ENCODE measurements at regions of chr1 and their contacts with region 1.

Region 1: DNA sequence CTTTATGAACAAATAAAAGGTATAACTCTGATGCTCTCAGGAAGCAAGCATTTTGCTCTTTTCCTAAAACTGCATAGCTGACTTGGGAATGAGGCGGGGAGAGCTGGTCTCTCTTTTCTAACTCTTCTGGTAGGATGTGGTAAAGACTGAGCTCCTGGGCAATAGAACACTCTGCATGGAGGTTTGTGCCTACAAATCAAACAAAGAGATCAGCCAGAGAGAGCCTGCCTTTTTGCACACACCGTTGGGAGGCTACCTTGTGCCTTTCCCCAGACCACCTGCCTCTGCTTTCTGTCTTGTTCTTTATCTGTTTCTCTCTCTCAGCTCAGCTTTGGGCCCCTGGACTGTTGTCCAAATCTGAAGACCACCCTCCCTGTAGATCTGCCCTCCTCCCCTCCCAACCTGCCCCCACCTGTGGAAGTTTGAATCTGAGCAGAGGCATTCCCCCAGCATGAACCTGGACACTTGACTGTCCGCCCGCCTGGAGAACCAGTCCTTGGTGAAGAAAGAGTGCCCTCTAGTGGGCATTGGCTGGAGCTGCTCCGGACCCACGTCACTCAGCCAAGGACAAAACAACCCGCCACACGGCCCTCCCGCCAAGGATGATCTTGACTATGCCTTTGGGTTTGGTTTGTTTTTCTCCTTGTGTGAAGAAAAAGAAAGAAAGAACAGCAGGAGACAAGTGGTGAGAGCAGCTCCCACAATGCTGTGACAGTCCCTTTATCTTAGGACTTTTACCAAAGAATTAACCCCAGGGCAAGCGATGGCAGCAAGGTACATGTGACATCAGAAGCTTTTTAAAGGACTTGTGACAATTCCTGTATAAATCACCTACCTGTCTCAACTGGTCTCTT is 228.2 kb downstream of the PBX1 start:
- DNase-seq: peak; percentile 83
- CTCF ChIP-seq: peak; percentile 95

Region 2: GRCh38 chr1:163361123-163361934 is 1425.9 kb before region 1 on chr1:
- CTCF ChIA-PET with region 1: interaction called, 11 read pairs
- POLR2A ChIA-PET with region 1: no interaction called
- DNase-seq: peak; percentile 4
- CTCF ChIP-seq: peak; percentile 60

Region 3: GRCh38 chr1:163410073-163410999 is 1376.9 kb before region 1 on chr1:
- CTCF ChIA-PET with region 1: interaction called, 10 read pairs
- POLR2A ChIA-PET with region 1: no interaction called
- DNase-seq: peak; percentile 35
- CTCF ChIP-seq: peak; percentile 83

Region 4: GRCh38 chr1:163528710-163529348 is 1258.4 kb before region 1 on chr1:
- CTCF ChIA-PET with region 1: interaction called, 15 read pairs
- POLR2A ChIA-PET with region 1: no interaction called
- DNase-seq: peak; percentile 10
- CTCF ChIP-seq: peak; percentile 49

Region 5: DNA sequence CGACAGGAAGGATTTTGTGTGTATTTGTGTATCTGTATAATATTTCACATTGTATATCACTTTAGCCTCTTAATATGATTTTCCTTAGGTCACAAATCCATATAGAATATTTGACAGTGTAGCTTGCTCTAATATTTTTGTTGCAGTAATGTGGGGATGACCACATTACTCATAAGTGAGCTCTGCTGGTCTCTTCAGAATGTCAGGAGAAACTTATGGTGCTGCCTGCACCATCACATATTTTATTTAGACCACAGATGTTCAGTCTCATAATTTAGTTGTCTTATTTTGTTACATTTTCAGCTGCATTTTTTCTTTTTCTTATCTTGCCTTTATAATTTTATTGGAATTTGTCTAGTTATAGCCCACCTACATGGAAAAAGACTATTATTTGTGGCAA is 22.9 kb before region 1 on chr1:
- CTCF ChIA-PET with region 1: interaction called, 15 read pairs
- POLR2A ChIA-PET with region 1: no interaction called
- DNase-seq: no peak
- CTCF ChIP-seq: no peak

Region 6: DNA sequence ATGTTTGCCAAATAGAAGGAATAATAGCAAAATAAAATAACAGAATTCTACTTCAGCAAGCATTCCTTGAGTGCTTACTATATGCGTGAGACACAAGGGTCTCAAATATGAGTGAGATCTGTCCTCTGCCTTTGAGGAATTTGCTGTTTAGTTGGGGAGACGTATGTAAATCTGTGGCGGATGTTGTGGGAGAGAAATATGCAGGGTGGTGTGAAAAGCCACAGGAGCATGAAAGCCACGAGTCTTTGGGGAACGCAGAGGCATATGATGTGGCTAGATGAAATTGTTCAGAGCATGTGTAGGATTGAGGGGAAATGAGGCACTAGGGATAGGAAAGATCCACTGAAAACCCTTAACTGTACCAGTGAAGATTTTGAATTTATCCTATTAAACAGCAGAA is 16.2 kb after region 1 on chr1:
- CTCF ChIA-PET with region 1: interaction called, 29 read pairs
- POLR2A ChIA-PET with region 1: no interaction called
- DNase-seq: no peak
- CTCF ChIP-seq: no peak

Region 7: GRCh38 chr1:164891612-164892011 is 104.4 kb after region 1 on chr1:
- CTCF ChIA-PET with region 1: no interaction called
- POLR2A ChIA-PET with region 1: no interaction called
- DNase-seq: no peak
- CTCF ChIP-seq: no peak